Tibial artery (tissue), 4 donors: ENCODE measurements at regions of chr13 and their contacts with region 1.

Region 1: GRCh38 chr13:44719857-44720671 is 143.9 kb upstream of the TSC22D1 start:
- DNase-seq: peak in 1 of 2 donors; percentile 35
- H3K4me3 ChIP-seq: no peak overlapping the region
- H3K27ac ChIP-seq: peak overlapping the region; percentile 53 to 75
- H3K4me1 ChIP-seq: peaks cover 0 to 72% (median 29%) of the 10 kb centered on the region in 4 donors
- H3K27me3 ChIP-seq: no peaks in the 10 kb centered on the region
- CTCF ChIP-seq: no peak

Region 2: GRCh38 chr13:44618326-44618725 is 101.7 kb before region 1 on chr13:
- intact Hi-C with region 1: no loop called
- DNase-seq: no peak
- H3K4me3 ChIP-seq: no peak overlapping the region
- H3K27ac ChIP-seq: no peak overlapping the region
- H3K4me1 ChIP-seq: peaks cover 0 to 6% (median 0%) of the 10 kb centered on the region in 4 donors
- H3K27me3 ChIP-seq: no peaks in the 10 kb centered on the region
- CTCF ChIP-seq: no peak

Region 3: DNA sequence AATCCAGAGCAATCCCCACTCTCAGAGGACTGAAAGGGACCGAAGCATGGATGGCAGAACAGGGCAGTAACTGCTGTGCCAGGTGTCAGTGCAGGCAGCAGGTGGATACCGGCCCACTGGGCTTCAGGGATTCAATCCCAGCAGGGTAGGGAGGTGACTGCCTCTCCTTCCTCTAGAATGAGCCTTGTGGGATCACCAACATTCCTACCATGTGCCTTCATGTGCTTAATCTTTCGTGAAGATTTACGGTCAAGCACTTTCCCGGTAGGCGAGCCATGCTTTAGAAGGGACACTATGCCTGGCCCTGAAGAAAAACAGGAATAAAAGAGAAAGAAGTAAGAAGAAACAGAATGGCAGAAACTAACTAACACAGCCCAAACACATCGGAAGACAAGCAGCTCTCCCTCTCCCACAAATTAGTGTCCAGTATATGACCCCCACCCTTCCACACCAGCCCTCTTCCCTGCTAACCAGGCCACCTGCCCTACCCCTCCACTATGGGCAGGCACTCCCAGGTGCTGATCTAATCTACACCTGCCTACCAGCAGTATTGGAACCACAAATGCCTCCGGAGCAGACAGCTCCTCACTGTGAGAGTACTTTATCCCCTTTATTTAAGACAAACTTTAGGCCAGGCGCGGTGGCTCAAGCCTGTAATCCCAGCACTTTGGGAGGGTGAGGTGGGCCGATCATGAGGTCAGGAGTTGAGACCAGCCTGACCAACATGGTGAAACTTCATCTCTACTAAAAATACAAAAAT is 106.7 kb after region 1 on chr13:
- intact Hi-C with region 1: loop called (anchors 10 kb)
- DNase-seq: no peak
- H3K4me3 ChIP-seq: no peak overlapping the region
- H3K27ac ChIP-seq: no peak overlapping the region
- H3K4me1 ChIP-seq: no peaks in the 10 kb centered on the region
- H3K27me3 ChIP-seq: no peaks in the 10 kb centered on the region
- CTCF ChIP-seq: no peak